ENCODE measurements at regions of chr19 and their contacts with region 1.

Region 1: GRCh38 chr19:12139885-12140547 is at the start of gene ZNF20:
- DNase-seq: peak; percentile 99
- ATAC-seq: peak; percentile 93
- H3K4me3 Mint-ChIP-seq: peak within 1 kb of the TSS; percentile 94
- H3K27ac Mint-ChIP-seq: peak within 1 kb of the TSS; percentile 98
- H3K4me1 Mint-ChIP-seq: peaks cover 30% of the 10 kb centered on the region
- H3K27me3 Mint-ChIP-seq: no peaks in the 10 kb centered on the region
- CTCF ChIP-seq: no peak
- total RNA-seq, gene ZNF20: 5.0 to 9.1 TPM (median 7.8 TPM) in 3 replicates

Region 2: GRCh38 chr19:11861301-11861700 is 278.7 kb before region 1 on chr19:
- CTCF ChIA-PET with region 1: no interaction called
- POLR2A ChIA-PET with region 1: no interaction called
- DNase-seq: no peak
- ATAC-seq: no peak
- H3K4me3 Mint-ChIP-seq: no peak overlapping the region
- H3K27ac Mint-ChIP-seq: no peak overlapping the region
- H3K4me1 Mint-ChIP-seq: no peaks in the 10 kb centered on the region
- H3K27me3 Mint-ChIP-seq: no peaks in the 10 kb centered on the region; the same call in none of the 2 replicates
- CTCF ChIP-seq: no peak

Region 3: GRCh38 chr19:11881151-11881800 is 258.7 kb before region 1 on chr19:
- CTCF ChIA-PET with region 1: interaction called, 12 read pairs
- POLR2A ChIA-PET with region 1: interaction called, 3 read pairs
- DNase-seq: peak; percentile 76
- ATAC-seq: peak; percentile 74
- H3K4me3 Mint-ChIP-seq: peak overlapping the region; percentile 13
- H3K27ac Mint-ChIP-seq: no peak overlapping the region
- H3K4me1 Mint-ChIP-seq: peaks cover 1% of the 10 kb centered on the region; the same call in 1 of the 2 replicates
- H3K27me3 Mint-ChIP-seq: peaks cover 8% of the 10 kb centered on the region
- CTCF ChIP-seq: peak; percentile 51

Region 4: DNA sequence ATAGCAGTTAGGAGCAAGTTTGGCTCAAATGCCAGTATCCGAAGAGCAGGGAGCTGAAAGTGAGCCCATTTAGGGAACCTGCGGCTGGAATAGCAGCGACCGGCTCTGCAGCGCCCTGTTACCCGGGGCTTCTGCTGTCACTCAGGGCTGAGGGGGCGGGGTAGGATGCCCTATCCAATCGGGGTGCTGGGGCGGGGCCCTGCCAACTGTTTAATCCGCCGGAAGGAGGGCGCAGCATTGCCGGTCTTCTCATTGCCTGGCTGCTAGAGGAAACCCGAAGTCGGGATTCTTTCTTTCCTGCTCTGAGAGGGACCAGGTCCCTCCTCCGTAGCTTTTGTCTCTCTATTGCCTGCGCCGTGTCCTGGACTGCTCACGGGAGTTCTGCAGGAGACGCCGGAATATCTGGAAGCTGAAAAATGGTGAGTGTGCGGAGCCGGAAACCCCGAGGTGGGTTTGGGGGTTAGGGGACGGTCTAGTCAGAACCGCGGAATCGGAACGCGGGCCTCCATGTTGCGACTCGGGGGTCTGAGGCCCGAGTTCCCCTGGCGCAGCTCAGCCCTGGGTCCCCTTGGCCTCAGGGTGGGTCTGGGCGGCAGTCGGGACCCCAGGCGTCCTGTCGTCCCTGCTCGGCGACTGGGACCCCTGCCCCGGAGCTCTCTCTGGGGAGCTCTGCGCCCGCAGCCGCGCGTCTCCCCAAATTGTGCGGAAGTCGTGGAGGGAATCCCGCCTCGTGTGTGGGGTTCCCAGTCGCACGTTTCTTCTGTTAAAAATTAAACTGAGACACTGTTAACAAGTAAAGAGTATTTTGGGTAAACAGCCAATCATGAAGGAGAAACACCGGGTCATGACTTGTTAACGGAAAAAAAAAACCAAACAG is 152.4 kb before region 1 on chr19:
- CTCF ChIA-PET with region 1: interaction called, 13 read pairs
- POLR2A ChIA-PET with region 1: interaction called, 10 read pairs
- DNase-seq: peak; percentile 98
- ATAC-seq: peak; percentile 97
- H3K4me3 Mint-ChIP-seq: peak overlapping the region; percentile 98
- H3K27ac Mint-ChIP-seq: peak overlapping the region; percentile 99
- H3K4me1 Mint-ChIP-seq: peaks cover 31% of the 10 kb centered on the region
- H3K27me3 Mint-ChIP-seq: no peaks in the 10 kb centered on the region
- CTCF ChIP-seq: no peak

Region 5: GRCh38 chr19:12064590-12065538 is 75.2 kb before region 1 on chr19 and contains the start of gene ZNF844:
- CTCF ChIA-PET with region 1: interaction called, 75 read pairs
- POLR2A ChIA-PET with region 1: interaction called, 16 read pairs
- DNase-seq: peak; percentile 98
- ATAC-seq: peak; percentile 94
- H3K4me3 Mint-ChIP-seq: peak within 1 kb of the TSS; percentile 87
- H3K27ac Mint-ChIP-seq: peak within 1 kb of the TSS; percentile 97
- H3K4me1 Mint-ChIP-seq: peaks cover 12% of the 10 kb centered on the region
- H3K27me3 Mint-ChIP-seq: no peaks in the 10 kb centered on the region
- CTCF ChIP-seq: no peak
- total RNA-seq, gene ZNF844: 9.1 to 10.5 TPM (median 9.4 TPM) in 3 replicates

Region 6: GRCh38 chr19:12126707-12127106 is 13.3 kb before region 1 on chr19:
- CTCF ChIA-PET with region 1: interaction called, 30 read pairs
- POLR2A ChIA-PET with region 1: interaction called, 3 read pairs
- DNase-seq: peak; percentile 22
- ATAC-seq: peak; percentile 53
- H3K4me3 Mint-ChIP-seq: no peak overlapping the region
- H3K27ac Mint-ChIP-seq: 0 out of 2 replicates have a peak overlapping the region, but pooled peaks have one; percentile 37
- H3K4me1 Mint-ChIP-seq: 0 out of 2 replicates have a peak, but pooled peaks cover 4% of the 10 kb centered on the region
- H3K27me3 Mint-ChIP-seq: no peaks in the 10 kb centered on the region; the same call in 1 of the 2 replicates
- CTCF ChIP-seq: peak; percentile 39; the same call in 1 of the 2 replicates

Region 7: DNA sequence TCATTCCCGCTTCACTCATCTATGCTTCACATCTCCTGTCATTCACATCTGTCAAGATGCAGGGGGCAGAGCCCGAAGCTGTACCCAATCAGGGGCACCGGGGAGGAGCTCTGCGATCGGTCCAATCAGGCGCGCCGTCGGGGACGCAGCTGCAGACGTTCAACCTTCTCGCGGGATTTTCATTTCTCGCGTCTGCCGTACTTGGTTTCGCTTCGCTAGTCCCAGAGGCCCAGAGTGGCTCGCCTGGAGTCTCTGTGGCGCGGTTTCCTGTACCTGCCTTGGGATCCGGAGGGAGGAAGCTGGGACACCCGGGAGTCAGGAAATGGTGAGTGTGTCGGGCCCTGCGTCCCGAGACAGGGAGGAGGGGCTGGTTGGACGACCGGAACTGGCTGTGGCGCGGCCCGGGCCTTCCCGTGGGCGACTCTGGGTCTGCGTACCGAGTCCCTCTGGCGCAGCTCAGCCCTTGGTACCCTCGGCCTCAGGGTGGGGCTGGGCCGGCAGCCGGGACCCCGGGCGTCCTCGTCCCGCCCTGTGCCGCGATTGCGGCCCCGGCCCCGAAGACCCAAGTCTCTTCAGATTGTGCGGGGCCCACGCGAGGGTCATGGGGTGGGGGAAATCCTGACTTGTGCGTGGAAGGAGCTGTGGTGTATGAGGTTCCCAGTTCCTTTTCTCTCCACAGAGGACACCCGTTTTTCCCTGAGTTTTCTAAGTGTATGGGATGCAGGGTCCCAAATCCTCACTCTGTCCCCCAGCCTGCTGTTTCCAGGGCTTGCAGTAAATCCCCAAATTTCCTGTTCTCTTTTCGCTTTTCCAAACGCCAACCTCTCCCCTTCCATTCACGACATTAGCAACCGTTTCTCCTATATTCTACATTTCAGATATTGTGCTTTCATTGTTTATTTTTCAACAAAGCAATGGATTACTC is 23.1 kb after region 1 on chr19 and contains the start of gene ZNF136:
- CTCF ChIA-PET with region 1: interaction called, 16 read pairs
- POLR2A ChIA-PET with region 1: interaction called, 7 read pairs
- DNase-seq: peak; percentile 96
- ATAC-seq: peak; percentile 96
- H3K4me3 Mint-ChIP-seq: peak within 1 kb of the TSS; percentile 94
- H3K27ac Mint-ChIP-seq: peak within 1 kb of the TSS; percentile 97
- H3K4me1 Mint-ChIP-seq: peaks cover 8% of the 10 kb centered on the region
- H3K27me3 Mint-ChIP-seq: peaks cover 5% of the 10 kb centered on the region
- CTCF ChIP-seq: no peak
- total RNA-seq, gene ZNF136: 6.2 to 6.7 TPM (median 6.7 TPM) in 3 replicates

Region 8: GRCh38 chr19:12202250-12202649 is 62.2 kb after region 1 on chr19:
- CTCF ChIA-PET with region 1: no interaction called
- POLR2A ChIA-PET with region 1: no interaction called
- DNase-seq: peak; percentile 72
- ATAC-seq: peak; percentile 94
- H3K4me3 Mint-ChIP-seq: no peak overlapping the region
- H3K27ac Mint-ChIP-seq: no peak overlapping the region
- H3K4me1 Mint-ChIP-seq: no peaks in the 10 kb centered on the region; the same call in 1 of the 2 replicates
- H3K27me3 Mint-ChIP-seq: no peaks in the 10 kb centered on the region
- CTCF ChIP-seq: 0 out of 2 replicates have a peak, but pooled peaks have one; percentile 38

Region 9: GRCh38 chr19:12237143-12237839 is 97.3 kb after region 1 on chr19:
- CTCF ChIA-PET with region 1: no interaction called
- POLR2A ChIA-PET with region 1: no interaction called
- DNase-seq: peak; percentile 45
- ATAC-seq: peak; percentile 46; the same call in 1 of the 2 replicates
- H3K4me3 Mint-ChIP-seq: no peak overlapping the region
- H3K27ac Mint-ChIP-seq: no peak overlapping the region
- H3K4me1 Mint-ChIP-seq: peaks cover 12% of the 10 kb centered on the region
- H3K27me3 Mint-ChIP-seq: no peaks in the 10 kb centered on the region
- CTCF ChIP-seq: no peak